Naive thymus-derived CD4-positive, alpha-beta T cell (primary cell): ENCODE measurements at regions of chr11 and their contacts with region 1.

Region 1: DNA sequence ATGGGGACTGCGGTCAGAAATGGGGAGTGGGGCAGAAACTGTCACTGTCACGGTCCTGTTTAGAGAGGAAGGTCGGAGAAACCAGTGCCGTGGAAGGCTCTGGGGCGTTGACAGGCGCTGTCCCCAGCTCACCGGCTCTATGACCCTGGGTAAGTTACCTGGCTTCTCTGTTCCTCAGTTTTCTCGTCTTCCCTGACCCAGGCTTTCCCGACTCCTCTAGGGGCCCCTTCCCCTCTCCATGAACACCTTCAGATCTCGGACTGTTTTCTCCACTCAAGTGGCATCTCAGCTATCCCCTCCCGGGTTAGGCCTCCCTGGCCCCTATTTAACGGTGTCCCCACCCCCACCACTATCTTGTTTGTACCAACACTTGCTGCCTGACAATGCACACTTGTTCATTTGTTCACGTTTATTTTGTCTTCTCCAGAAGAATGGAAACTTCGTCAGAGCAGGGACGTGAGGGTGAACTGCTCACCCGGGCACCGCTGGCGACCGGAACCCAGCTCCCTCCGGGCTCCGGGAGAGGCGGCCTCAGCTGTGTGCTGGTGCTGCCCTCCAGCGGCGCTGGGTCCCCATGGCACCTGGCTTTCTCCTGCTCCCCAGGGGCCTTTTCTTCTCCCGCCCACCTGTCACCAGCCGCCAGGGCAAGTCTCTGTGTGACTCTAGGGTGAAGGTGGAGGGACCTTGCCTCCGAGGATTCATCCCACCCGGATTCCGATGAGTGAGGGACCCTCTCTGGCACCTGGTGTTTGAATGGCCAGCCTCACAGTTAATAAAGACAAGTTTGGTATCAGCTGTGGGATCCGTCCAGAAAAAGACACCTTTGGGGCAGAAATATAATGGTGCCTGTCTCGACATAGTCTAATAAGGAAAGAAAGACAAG is 33.1 kb upstream of the SLC35C1 start:
- DNase-seq: peak; percentile 57 to 86 (median 70)
- ATAC-seq: peak; percentile 91
- H3K4me3 ChIP-seq: peak overlapping the region; percentile 83
- H3K4me3 Mint-ChIP-seq: peak overlapping the region; percentile 85 to 99 (median 92)
- H3K27ac ChIP-seq: peak overlapping the region; percentile 54
- H3K27ac Mint-ChIP-seq: peak overlapping the region; percentile 26 to 84 (median 72)
- H3K4me1 ChIP-seq: peaks cover 7 to 15% of the 10 kb centered on the region in 2 donors
- H3K4me1 Mint-ChIP-seq: peaks cover 6 to 16% (median 12%) of the 10 kb centered on the region in 7 donors
- H3K27me3 ChIP-seq: no peaks in the 10 kb centered on the region
- H3K27me3 Mint-ChIP-seq: peaks cover 0 to 5% (median 0%) of the 10 kb centered on the region in 5 donors

Region 2: GRCh38 chr11:45339729-45340519 is 431.9 kb before region 1 on chr11:
- CTCF ChIA-PET with region 1: interaction called, 3 read pairs
- POLR2A ChIA-PET with region 1: no interaction called
- intact Hi-C with region 1: loop called in 1 of 2 experiments (anchors 1 kb)
- DNase-seq: peak; percentile 79 to 92 (median 87)
- ATAC-seq: peak; percentile 100
- H3K4me3 ChIP-seq: peak overlapping the region; percentile 47
- H3K4me3 Mint-ChIP-seq: peak overlapping the region; percentile 39 to 86 (median 64)
- H3K27ac ChIP-seq: no peak overlapping the region
- H3K27ac Mint-ChIP-seq: peak overlapping the region in 2 of 9 donors; percentile 57 to 70
- H3K4me1 ChIP-seq: peaks cover 0 to 7% of the 10 kb centered on the region in 2 donors
- H3K4me1 Mint-ChIP-seq: peaks cover 8 to 13% (median 11%) of the 10 kb centered on the region in 7 donors
- H3K27me3 ChIP-seq: no peaks in the 10 kb centered on the region
- H3K27me3 Mint-ChIP-seq: peaks cover 0 to 31% (median 2%) of the 10 kb centered on the region in 5 donors

Region 3: DNA sequence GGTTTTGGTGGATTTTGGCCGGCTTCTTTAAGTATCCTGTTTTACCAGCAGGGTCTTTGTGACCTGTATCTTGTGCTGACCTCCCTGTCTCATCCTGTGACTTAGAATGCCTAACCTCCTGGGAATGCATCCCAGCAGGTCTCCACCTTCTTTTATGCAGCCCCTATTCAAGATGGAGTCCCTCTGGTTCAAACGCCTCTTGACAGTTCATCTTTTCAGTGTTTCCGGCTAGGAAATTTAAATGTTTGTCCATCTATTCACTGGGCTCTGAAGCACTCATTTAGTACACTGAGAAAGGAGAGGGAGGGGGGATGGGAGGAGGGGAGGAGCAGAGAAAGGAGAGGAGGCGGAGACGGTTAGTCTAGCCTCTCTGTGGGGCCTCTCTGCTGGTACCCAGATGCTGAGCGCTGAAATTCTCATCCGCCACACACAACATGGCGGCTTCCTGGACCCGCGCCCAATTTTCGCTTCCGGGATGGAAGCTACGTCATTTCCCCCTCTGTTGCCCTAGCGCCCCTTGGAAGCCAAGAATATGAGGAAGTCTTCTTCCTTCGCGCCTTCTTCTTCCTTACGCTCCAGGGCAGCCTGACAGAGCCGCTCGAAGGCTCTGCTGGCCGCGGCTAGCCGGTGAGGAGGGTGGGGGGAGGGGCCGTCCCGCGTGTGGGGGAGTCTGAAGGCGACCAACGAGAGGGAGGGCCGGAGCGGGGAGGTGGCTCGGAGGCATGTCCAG is 416.7 kb before region 1 on chr11:
- CTCF ChIA-PET with region 1: interaction called, 3 read pairs
- POLR2A ChIA-PET with region 1: no interaction called
- intact Hi-C with region 1: loop called in 1 of 2 experiments (anchors 5 kb)
- DNase-seq: peak; percentile 77 to 91 (median 88)
- ATAC-seq: peak; percentile 96
- H3K4me3 ChIP-seq: peak overlapping the region; percentile 93
- H3K4me3 Mint-ChIP-seq: peak overlapping the region; percentile 75 to 87 (median 82)
- H3K27ac ChIP-seq: peak overlapping the region; percentile 73
- H3K27ac Mint-ChIP-seq: peak overlapping the region; percentile 70 to 91 (median 83)
- H3K4me1 ChIP-seq: peaks cover 0 to 5% of the 10 kb centered on the region in 2 donors
- H3K4me1 Mint-ChIP-seq: peaks cover 9 to 31% (median 26%) of the 10 kb centered on the region in 7 donors
- H3K27me3 ChIP-seq: no peaks in the 10 kb centered on the region
- H3K27me3 Mint-ChIP-seq: peaks cover 0 to 28% (median 7%) of the 10 kb centered on the region in 5 donors

Region 4: GRCh38 chr11:45371251-45372115 is 400.3 kb before region 1 on chr11:
- CTCF ChIA-PET with region 1: interaction called, 5 read pairs
- POLR2A ChIA-PET with region 1: no interaction called
- intact Hi-C with region 1: loop called in 1 of 2 experiments (anchors 1 kb)
- DNase-seq: peak; percentile 18 to 58 (median 39)
- ATAC-seq: peak; percentile 74
- H3K4me3 ChIP-seq: no peak overlapping the region
- H3K4me3 Mint-ChIP-seq: peak overlapping the region in 7 of 10 donors; percentile 24 to 62 (median 44)
- H3K27ac ChIP-seq: no peak overlapping the region
- H3K27ac Mint-ChIP-seq: peak overlapping the region in 3 of 9 donors; percentile 3 to 74 (median 38)
- H3K4me1 ChIP-seq: peaks cover 6 to 15% of the 10 kb centered on the region in 2 donors
- H3K4me1 Mint-ChIP-seq: peaks cover 8 to 27% (median 17%) of the 10 kb centered on the region in 7 donors
- H3K27me3 ChIP-seq: peaks cover 0 to 6% of the 10 kb centered on the region in 2 donors
- H3K27me3 Mint-ChIP-seq: peaks cover 16 to 33% (median 21%) of the 10 kb centered on the region in 5 donors

Region 5: DNA sequence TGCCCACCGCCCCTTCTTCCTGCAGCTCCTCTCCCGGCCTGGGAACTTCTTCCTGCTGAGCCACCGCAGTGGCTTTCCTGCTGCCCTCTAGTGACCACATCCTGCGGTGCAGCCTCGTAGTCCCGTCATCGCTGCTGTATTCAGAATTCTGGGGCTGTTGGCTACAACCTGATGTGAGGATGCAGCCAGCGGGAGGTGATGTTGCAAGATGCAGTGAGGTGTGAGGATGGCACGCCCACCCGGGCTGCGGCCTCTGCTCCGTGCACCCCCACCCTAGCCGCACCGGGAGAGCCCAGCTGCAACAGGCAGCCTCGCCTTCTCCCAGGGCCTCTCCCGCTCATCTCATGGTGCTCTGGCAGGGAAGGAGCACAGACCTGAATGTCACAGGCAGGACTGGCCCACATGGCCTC is 116.5 kb before region 1 on chr11:
- CTCF ChIA-PET with region 1: no interaction called
- POLR2A ChIA-PET with region 1: no interaction called
- intact Hi-C with region 1: loop called in 1 of 2 experiments (anchors 5 kb)
- DNase-seq: peak in 7 of 9 donors; percentile 21 to 66 (median 37)
- ATAC-seq: peak; percentile 73
- H3K4me3 ChIP-seq: no peak overlapping the region
- H3K4me3 Mint-ChIP-seq: peak overlapping the region in 1 of 10 donors; percentile 74
- H3K27ac ChIP-seq: no peak overlapping the region
- H3K27ac Mint-ChIP-seq: peak overlapping the region in 1 of 9 donors; percentile 57
- H3K4me1 ChIP-seq: peaks cover 0 to 6% of the 10 kb centered on the region in 2 donors
- H3K4me1 Mint-ChIP-seq: peaks cover 0 to 13% (median 7%) of the 10 kb centered on the region in 7 donors
- H3K27me3 ChIP-seq: peaks cover 0 to under 1% of the 10 kb centered on the region in 2 donors
- H3K27me3 Mint-ChIP-seq: peaks cover 12 to 49% (median 24%) of the 10 kb centered on the region in 5 donors

Region 6: DNA sequence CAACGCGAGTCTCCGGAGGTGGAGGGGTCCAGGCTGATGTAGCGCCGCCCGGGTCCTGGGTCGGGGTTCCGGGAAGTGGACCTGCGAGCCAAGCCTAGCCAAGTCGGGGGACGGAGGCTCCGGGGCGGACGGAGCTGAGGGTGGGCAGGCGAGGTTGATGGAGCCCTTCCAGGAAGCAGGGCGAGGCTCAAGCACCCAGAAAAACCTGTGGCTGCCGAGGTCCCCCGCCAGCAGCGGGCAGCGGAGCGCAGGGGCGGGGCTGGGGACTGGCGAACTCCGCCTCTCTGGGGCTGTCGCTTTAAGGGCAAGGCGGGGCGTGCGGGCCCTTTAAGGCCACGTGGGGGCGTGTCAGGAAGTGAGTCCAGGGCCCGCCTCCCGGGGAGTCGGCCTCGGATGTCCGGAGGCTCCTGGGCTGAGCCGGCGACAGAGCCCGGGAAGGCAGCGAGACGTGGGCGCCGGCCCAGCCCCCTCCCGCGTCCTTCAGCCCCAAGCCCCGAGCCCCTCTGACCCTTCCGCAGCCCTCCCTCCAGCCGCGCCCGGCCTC is 33.0 kb after region 1 on chr11 and contains the start of gene SLC35C1:
- CTCF ChIA-PET with region 1: interaction called, 8 read pairs
- POLR2A ChIA-PET with region 1: interaction called, 6 read pairs
- intact Hi-C with region 1: loop called (anchors 1 kb)
- DNase-seq: peak; percentile 89 to 97 (median 93)
- ATAC-seq: peak; percentile 99
- H3K4me3 ChIP-seq: peak within 1 kb of the TSS; percentile 95
- H3K4me3 Mint-ChIP-seq: peak within 1 kb of the TSS; percentile 86 to 99 (median 92)
- H3K27ac ChIP-seq: peak within 1 kb of the TSS; percentile 87
- H3K27ac Mint-ChIP-seq: peak within 1 kb of the TSS; percentile 61 to 94 (median 91)
- H3K4me1 ChIP-seq: peaks cover 27 to 29% of the 10 kb centered on the region in 2 donors
- H3K4me1 Mint-ChIP-seq: peaks cover 31 to 43% (median 40%) of the 10 kb centered on the region in 7 donors
- H3K27me3 ChIP-seq: no peaks in the 10 kb centered on the region
- H3K27me3 Mint-ChIP-seq: no peaks in the 10 kb centered on the region
- total RNA-seq, gene SLC35C1: 7.9 to 22.8 (median 14.2) TPM

Region 7: DNA sequence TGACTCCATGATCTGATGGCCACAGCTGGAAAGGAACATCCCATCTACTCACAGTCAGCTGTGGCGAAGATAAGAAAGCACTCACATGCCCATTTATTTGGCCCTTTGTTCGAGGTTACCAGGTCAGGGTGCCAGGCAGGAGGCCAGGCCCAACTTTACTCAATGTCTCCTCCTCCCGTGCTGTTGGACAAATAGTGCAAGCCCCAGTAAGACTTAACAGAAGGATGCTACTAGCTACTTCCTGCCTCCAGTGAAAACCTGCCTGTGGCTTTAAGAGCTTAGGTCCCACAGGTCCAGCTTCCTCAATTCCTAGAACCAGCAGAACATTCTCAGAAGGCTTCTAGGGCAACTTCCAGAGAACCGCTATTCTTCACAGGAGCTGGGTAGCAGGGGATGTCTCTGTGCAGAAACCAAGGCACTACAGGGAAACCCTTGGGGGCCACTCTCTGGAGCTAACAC is 62.5 kb after region 1 on chr11:
- CTCF ChIA-PET with region 1: no interaction called
- POLR2A ChIA-PET with region 1: no interaction called
- intact Hi-C with region 1: no loop called
- DNase-seq: peak in 1 of 9 donors; percentile 27
- ATAC-seq: peak; percentile 47
- H3K4me3 ChIP-seq: no peak overlapping the region
- H3K4me3 Mint-ChIP-seq: peak overlapping the region in 5 of 10 donors; percentile 0 to 88 (median 29)
- H3K27ac ChIP-seq: no peak overlapping the region
- H3K27ac Mint-ChIP-seq: peak overlapping the region in 3 of 9 donors; percentile 23 to 92 (median 71)
- H3K4me1 ChIP-seq: no peaks in the 10 kb centered on the region
- H3K4me1 Mint-ChIP-seq: peaks cover 7 to 40% (median 11%) of the 10 kb centered on the region in 7 donors
- H3K27me3 ChIP-seq: no peaks in the 10 kb centered on the region
- H3K27me3 Mint-ChIP-seq: peaks cover 0 to 31% (median 0%) of the 10 kb centered on the region in 5 donors

Region 8: GRCh38 chr11:46006418-46007070 is 234.7 kb after region 1 on chr11:
- CTCF ChIA-PET with region 1: interaction called, 5 read pairs
- POLR2A ChIA-PET with region 1: no interaction called
- intact Hi-C with region 1: loop called (anchors 1 kb)
- DNase-seq: peak in 7 of 9 donors; percentile 18 to 65 (median 53)
- ATAC-seq: peak; percentile 86
- H3K4me3 ChIP-seq: no peak overlapping the region
- H3K4me3 Mint-ChIP-seq: no peak overlapping the region
- H3K27ac ChIP-seq: no peak overlapping the region
- H3K27ac Mint-ChIP-seq: peak overlapping the region in 2 of 9 donors; percentile 2 to 41
- H3K4me1 ChIP-seq: no peaks in the 10 kb centered on the region
- H3K4me1 Mint-ChIP-seq: peaks cover under 1 to 8% (median 4%) of the 10 kb centered on the region in 7 donors
- H3K27me3 ChIP-seq: no peaks in the 10 kb centered on the region
- H3K27me3 Mint-ChIP-seq: no peaks in the 10 kb centered on the region

Region 9: DNA sequence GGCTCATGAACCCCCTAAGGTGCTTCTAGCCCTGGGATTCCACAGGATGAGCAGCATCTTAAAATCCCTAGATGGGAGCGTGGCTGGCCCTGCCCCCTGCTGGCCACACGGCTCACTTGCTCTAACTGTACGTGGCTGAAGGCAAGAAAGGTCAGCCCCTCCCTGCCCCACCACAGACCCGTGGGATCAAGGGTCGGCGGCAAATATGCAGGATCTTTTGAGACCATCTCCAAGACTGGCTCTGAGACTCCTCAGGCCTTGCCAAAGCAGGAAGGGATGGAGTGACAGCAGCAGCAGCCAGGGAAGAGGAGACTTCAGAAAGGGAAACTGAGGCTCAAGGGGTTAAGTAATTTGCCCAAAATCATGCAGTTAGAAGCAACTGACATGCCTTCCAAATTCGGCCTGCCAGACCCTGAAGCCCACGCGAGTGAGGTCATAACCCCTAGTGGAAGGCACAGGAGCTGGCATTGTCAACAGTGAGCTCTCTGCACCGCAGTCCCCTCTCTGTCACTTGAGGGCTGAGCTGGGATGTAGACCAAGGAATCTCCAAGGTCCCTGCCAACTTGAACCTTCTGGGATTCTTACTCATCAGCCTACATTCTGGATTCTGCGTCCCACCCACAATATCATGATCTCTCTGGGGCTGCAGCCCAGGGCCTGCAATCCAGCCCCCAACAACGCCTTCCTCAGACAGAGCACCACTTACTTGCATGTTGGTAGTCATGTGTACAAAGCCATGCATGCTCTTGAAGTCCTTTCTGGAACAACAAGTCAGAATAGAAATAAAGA is 537.0 kb after region 1 on chr11:
- CTCF ChIA-PET with region 1: no interaction called
- POLR2A ChIA-PET with region 1: no interaction called
- intact Hi-C with region 1: no loop called
- DNase-seq: peak; percentile 29 to 66 (median 53)
- ATAC-seq: peak; percentile 78
- H3K4me3 ChIP-seq: no peak overlapping the region
- H3K4me3 Mint-ChIP-seq: peak overlapping the region in 2 of 10 donors; percentile 53 to 56
- H3K27ac ChIP-seq: no peak overlapping the region
- H3K27ac Mint-ChIP-seq: peak overlapping the region in 3 of 9 donors; percentile 38 to 56 (median 44)
- H3K4me1 ChIP-seq: peaks cover 0 to 5% of the 10 kb centered on the region in 2 donors
- H3K4me1 Mint-ChIP-seq: peaks cover 10 to 23% (median 19%) of the 10 kb centered on the region in 7 donors
- H3K27me3 ChIP-seq: no peaks in the 10 kb centered on the region
- H3K27me3 Mint-ChIP-seq: peaks cover 0 to 3% (median 0%) of the 10 kb centered on the region in 5 donors